Activated CD4-positive, alpha-beta memory T cell treated with anti-CD3 and anti-CD28 coated beads for 36 hours (primary cell): ENCODE measurements at regions of chr2 and their contacts with region 1.

Region 1: DNA sequence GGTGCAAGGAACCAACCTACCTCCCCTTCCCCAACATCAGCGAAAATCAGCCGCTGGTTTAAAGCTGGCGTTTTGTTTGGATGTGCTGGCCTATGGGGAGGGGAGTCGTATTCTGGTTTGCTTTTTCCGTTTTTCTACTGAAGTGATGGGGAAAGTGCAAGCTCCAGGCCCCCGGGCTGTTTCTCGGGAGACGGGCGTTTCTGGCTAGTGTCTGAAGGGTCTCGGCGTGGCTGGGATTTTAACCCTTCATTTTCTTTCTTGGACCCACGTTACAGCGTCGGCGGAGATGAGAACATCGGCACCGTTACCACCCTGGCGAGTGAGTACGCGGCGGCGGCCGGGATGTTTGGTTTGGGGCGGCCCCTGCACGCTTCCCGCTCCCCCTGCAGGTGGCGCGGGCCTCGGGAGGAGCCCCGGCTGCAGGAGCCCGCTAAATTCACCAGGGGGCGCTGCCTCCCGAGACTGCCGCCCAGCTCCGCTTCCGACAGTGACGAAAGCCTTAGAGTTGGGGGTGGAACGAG is 70.7 kb downstream of the PLB1 start:
- DNase-seq: peak; percentile 94
- H3K4me3 Mint-ChIP-seq: peak overlapping the region; percentile 83
- H3K27ac Mint-ChIP-seq: peak overlapping the region; percentile 38
- H3K4me1 Mint-ChIP-seq: peaks cover 15% of the 10 kb centered on the region
- H3K27me3 Mint-ChIP-seq: no peaks in the 10 kb centered on the region

Region 2: DNA sequence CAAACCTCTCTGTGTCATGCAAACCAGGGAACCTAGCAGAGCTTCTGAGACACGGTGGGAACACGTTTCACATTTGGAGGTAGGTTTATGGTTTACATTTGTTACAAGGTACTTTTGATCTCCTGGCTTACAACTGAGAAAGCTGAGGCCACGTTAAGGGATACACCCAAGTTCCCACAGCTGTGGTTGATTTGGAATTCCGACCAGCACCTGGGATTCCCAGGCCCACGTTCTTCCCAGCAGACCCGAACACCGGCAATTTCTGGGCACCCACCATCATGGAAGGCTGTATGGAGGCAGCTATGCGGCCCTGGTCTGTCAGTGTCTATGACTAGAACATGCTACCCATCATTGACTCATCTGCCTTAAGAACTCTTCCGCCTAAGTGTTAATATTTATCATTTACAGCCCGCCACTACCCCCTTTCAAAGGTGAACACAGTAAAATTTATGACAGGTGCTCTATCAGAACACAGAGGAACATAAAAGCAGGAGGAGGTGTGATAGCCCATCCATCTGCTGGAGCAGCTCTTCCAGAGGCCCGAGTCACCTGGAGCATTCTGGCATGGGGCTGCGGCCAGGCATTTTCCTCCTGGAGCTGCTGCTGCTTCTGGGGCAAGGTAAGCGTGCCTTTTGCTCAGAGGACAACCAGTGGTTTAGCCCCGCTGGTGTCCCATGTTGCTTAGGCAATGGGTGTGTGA is 70.9 kb before region 1 on chr2 and contains the start of gene PLB1:
- CTCF ChIA-PET with region 1: no interaction called
- POLR2A ChIA-PET with region 1: no interaction called
- intact Hi-C with region 1: no loop called
- DNase-seq: no peak
- H3K4me3 Mint-ChIP-seq: no peak within 1 kb of the TSS
- H3K27ac Mint-ChIP-seq: no peak within 1 kb of the TSS
- H3K4me1 Mint-ChIP-seq: no peaks in the 10 kb centered on the region
- H3K27me3 Mint-ChIP-seq: peaks cover 2% of the 10 kb centered on the region
- total RNA-seq, gene PLB1: 0.64 to 0.85 TPM

Region 3: GRCh38 chr2:28521663-28522062 is 44.9 kb before region 1 on chr2:
- CTCF ChIA-PET with region 1: no interaction called
- POLR2A ChIA-PET with region 1: no interaction called
- intact Hi-C with region 1: no loop called
- DNase-seq: no peak
- H3K4me3 Mint-ChIP-seq: no peak overlapping the region
- H3K27ac Mint-ChIP-seq: no peak overlapping the region
- H3K4me1 Mint-ChIP-seq: no peaks in the 10 kb centered on the region
- H3K27me3 Mint-ChIP-seq: peaks cover 40% of the 10 kb centered on the region

Region 4: DNA sequence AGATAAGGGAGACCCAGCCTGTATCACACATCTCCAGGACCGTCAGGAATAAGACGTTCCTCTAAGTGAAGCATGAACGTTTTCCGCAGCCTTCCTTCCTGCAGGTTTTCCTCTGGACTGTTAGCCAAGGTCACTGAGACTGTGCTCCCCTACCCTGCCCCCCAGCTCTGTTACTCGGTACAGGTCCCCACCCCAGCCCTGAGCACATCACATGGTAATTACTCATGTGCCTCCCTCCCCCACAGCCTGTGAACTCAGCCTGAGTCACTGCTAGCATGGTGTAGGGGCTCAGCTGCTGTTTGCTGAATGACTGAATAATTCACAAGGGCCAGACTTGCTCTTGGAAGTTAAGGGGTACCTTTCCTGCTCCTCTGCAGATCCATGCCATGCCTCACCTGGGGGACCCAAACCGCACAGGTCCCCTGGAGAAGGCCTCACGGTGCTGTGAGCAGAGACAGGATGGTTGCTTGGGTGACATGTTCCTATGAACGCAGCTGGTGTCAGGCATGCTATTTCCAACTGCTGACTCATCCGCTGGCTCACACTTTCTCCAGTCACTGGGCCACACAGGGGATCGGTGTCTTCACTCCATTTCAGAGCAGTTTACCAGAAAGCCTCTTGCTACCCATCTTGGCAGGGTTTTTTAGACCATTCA is 17.4 kb after region 1 on chr2:
- CTCF ChIA-PET with region 1: interaction called, 14 read pairs
- POLR2A ChIA-PET with region 1: no interaction called
- intact Hi-C with region 1: loop called (anchors 1 kb)
- DNase-seq: peak; percentile 86
- H3K4me3 Mint-ChIP-seq: peak overlapping the region; percentile 46
- H3K27ac Mint-ChIP-seq: peak overlapping the region; percentile 78
- H3K4me1 Mint-ChIP-seq: peaks cover 46% of the 10 kb centered on the region
- H3K27me3 Mint-ChIP-seq: no peaks in the 10 kb centered on the region

Region 5: DNA sequence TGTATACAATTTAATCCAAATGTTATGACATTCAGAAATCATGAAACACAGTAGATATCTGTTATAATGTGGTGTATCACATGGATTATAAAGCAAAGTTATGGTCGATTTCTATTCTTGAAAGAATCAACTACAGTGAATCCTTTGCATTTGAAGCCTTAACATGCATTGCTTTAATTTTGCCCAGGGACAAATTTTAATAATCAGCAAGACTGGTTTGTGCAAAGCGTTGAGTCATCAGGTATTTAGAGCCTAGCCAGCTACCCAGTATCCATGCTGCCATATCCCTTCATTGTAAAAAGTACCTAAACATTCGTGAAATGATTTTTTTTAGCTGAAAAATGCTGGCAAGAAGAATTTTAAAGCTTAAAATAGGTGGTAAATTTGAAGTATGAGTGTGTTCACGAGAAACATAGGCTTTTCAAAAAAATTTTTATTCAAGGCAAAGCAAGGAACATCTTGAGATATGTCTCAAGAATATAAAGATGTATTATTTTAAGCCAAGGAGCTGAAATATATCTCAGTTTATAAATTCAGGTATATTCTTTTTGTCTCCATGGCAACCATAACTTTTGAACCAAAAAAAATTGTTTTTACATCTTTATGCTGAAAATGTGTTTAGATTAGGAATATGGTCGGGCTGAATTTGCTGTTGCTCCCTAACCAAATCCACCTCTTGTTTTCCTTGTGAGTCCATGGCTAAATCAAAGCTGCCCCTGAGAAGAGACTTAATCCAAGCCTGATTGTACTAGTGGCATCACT is 235.3 kb after region 1 on chr2:
- CTCF ChIA-PET with region 1: interaction called, 10 read pairs
- POLR2A ChIA-PET with region 1: no interaction called
- intact Hi-C with region 1: no loop called
- DNase-seq: no peak
- H3K4me3 Mint-ChIP-seq: no peak overlapping the region
- H3K27ac Mint-ChIP-seq: no peak overlapping the region
- H3K4me1 Mint-ChIP-seq: peaks cover 8% of the 10 kb centered on the region
- H3K27me3 Mint-ChIP-seq: no peaks in the 10 kb centered on the region

Region 6: GRCh38 chr2:28821295-28821958 is 254.8 kb after region 1 on chr2:
- CTCF ChIA-PET with region 1: interaction called, 16 read pairs
- POLR2A ChIA-PET with region 1: no interaction called
- intact Hi-C with region 1: no loop called
- DNase-seq: peak; percentile 62
- H3K4me3 Mint-ChIP-seq: no peak overlapping the region
- H3K27ac Mint-ChIP-seq: no peak overlapping the region
- H3K4me1 Mint-ChIP-seq: peaks cover 6% of the 10 kb centered on the region
- H3K27me3 Mint-ChIP-seq: no peaks in the 10 kb centered on the region

Region 7: GRCh38 chr2:28894470-28895177 is 328.0 kb after region 1 on chr2 and contains the start of gene WDR43:
- CTCF ChIA-PET with region 1: interaction called, 3 read pairs
- POLR2A ChIA-PET with region 1: no interaction called
- intact Hi-C with region 1: loop called (anchors 2 kb)
- DNase-seq: peak; percentile 98
- H3K4me3 Mint-ChIP-seq: peak within 1 kb of the TSS; percentile 93
- H3K27ac Mint-ChIP-seq: peak within 1 kb of the TSS; percentile 94
- H3K4me1 Mint-ChIP-seq: peaks cover 34% of the 10 kb centered on the region
- H3K27me3 Mint-ChIP-seq: no peaks in the 10 kb centered on the region
- total RNA-seq, gene WDR43: 72.7 to 84.8 TPM

Region 8: GRCh38 chr2:29014811-29015421 is 448.3 kb after region 1 on chr2:
- CTCF ChIA-PET with region 1: no interaction called
- POLR2A ChIA-PET with region 1: no interaction called
- intact Hi-C with region 1: loop called (anchors 10 kb)
- DNase-seq: peak; percentile 87
- H3K4me3 Mint-ChIP-seq: peak overlapping the region; percentile 79
- H3K27ac Mint-ChIP-seq: peak overlapping the region; percentile 95
- H3K4me1 Mint-ChIP-seq: peaks cover 89% of the 10 kb centered on the region
- H3K27me3 Mint-ChIP-seq: no peaks in the 10 kb centered on the region